ENCODE measurements at regions of chr11 and their contacts with region 1.

Region 1: GRCh38 chr11:57493507-57494503 is 21.7 kb downstream of the SLC43A1 start:
- DNase-seq: peak; percentile 82
- H3K4me3 Mint-ChIP-seq: no peak overlapping the region
- H3K27ac Mint-ChIP-seq: no peak overlapping the region
- H3K4me1 Mint-ChIP-seq: peaks cover 13% of the 10 kb centered on the region
- H3K27me3 Mint-ChIP-seq: peaks cover under 1% of the 10 kb centered on the region
- CTCF ChIP-seq: peak; percentile 88

Region 2: GRCh38 chr11:57444362-57445121 is 49.3 kb before region 1 on chr11:
- CTCF ChIA-PET with region 1: interaction called, 17 read pairs
- POLR2A ChIA-PET with region 1: no interaction called
- intact Hi-C with region 1: no loop called
- DNase-seq: no peak
- H3K4me3 Mint-ChIP-seq: no peak overlapping the region
- H3K27ac Mint-ChIP-seq: no peak overlapping the region
- H3K4me1 Mint-ChIP-seq: no peaks in the 10 kb centered on the region
- H3K27me3 Mint-ChIP-seq: peaks cover 10% of the 10 kb centered on the region
- CTCF ChIP-seq: no peak

Region 3: GRCh38 chr11:57480409-57481137 is 13.2 kb before region 1 on chr11:
- CTCF ChIA-PET with region 1: interaction called, 45 read pairs
- POLR2A ChIA-PET with region 1: interaction called, 4 read pairs
- intact Hi-C with region 1: no loop called
- DNase-seq: peak; percentile 68
- H3K4me3 Mint-ChIP-seq: no peak overlapping the region
- H3K27ac Mint-ChIP-seq: no peak overlapping the region
- H3K4me1 Mint-ChIP-seq: peaks cover 2% of the 10 kb centered on the region
- H3K27me3 Mint-ChIP-seq: peaks cover 24% of the 10 kb centered on the region
- CTCF ChIP-seq: peak; percentile 72

Region 4: GRCh38 chr11:57515332-57516060 is 21.7 kb after region 1 on chr11 and contains the start of gene SLC43A1:
- CTCF ChIA-PET with region 1: interaction called, 58 read pairs
- POLR2A ChIA-PET with region 1: no interaction called
- intact Hi-C with region 1: no loop called
- DNase-seq: peak; percentile 42
- H3K4me3 Mint-ChIP-seq: peak within 1 kb of the TSS; percentile 83
- H3K27ac Mint-ChIP-seq: peak within 1 kb of the TSS; percentile 21
- H3K4me1 Mint-ChIP-seq: no peaks in the 10 kb centered on the region
- H3K27me3 Mint-ChIP-seq: no peaks in the 10 kb centered on the region
- CTCF ChIP-seq: no peak
- total RNA-seq, gene SLC43A1: 1.7 and 3.2 TPM in 2 replicates

Region 5: GRCh38 chr11:57649826-57650738 is 156.3 kb after region 1 on chr11 and contains the start of gene YPEL4:
- CTCF ChIA-PET with region 1: interaction called, 98 read pairs
- POLR2A ChIA-PET with region 1: no interaction called
- intact Hi-C with region 1: no loop called
- DNase-seq: peak; percentile 75
- H3K4me3 Mint-ChIP-seq: peak within 1 kb of the TSS; percentile 73
- H3K27ac Mint-ChIP-seq: peak within 1 kb of the TSS; percentile 54
- H3K4me1 Mint-ChIP-seq: peaks cover 36% of the 10 kb centered on the region
- H3K27me3 Mint-ChIP-seq: peaks cover 35% of the 10 kb centered on the region
- CTCF ChIP-seq: no peak
- total RNA-seq, gene YPEL4: 0.16 TPM in 1 of 2 replicates, not detected in the other